ENCODE measurements at regions of chr22 and their contacts with region 1.

Region 1: DNA sequence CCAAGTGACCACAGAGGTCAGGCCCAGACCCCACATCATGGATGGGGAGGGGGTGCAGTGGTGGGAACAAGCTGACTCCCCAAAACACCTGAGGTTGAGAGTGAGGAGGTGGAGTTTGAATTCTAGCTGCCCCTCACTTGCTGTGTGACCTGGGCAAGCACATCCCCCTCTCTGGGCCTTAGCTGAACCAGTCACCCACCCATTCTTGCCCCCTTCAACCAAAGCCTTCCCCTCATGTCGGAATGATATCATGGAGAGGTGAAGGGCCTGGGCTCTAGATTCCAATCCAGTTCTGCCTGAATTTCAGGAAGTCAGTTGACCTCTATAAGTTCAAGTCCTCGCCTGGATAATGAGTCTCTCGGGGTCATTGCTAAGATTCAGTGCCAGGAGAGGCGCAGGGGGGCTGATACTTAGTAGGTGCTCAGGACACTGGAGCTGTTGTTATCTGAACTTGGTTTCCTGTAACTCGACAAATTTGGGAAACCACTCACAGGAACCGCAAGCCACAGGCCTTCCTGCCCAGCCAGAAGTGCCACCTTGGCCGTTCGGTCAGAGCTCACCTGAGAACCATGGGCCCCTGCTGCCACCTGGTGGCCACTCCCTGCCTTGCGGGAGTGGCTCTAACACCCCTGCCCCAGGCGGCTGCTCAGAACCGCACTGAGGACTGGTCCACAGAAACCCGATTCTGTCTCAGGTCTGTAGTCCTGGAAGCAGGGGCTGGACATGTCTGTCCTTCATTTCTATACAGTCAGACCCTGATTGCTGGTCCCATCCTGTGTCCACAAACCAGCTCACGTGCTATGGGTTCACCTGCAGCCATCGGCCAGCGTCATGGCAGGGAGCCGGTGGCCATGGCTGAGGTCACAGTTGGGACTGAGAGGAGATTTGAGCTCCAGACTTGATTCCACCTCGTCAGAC is 6.9 kb downstream of the CDC42EP1 start:
- DNase-seq: peak; percentile 91
- H3K4me3 ChIP-seq: no peak overlapping the region; a peak in 1 of 4 replicates
- H3K27ac ChIP-seq: no peak overlapping the region
- H3K4me1 ChIP-seq: peaks cover 0 to 24% of the 10 kb centered on the region in 2 experiments; a peak in 3 of 4 replicates
- H3K27me3 ChIP-seq: no peaks in the 10 kb centered on the region
- CTCF ChIP-seq: peak; percentile 87
- EP300 ChIP-seq: no peak
- RAD21 ChIP-seq: peak; percentile 95

Region 2: DNA sequence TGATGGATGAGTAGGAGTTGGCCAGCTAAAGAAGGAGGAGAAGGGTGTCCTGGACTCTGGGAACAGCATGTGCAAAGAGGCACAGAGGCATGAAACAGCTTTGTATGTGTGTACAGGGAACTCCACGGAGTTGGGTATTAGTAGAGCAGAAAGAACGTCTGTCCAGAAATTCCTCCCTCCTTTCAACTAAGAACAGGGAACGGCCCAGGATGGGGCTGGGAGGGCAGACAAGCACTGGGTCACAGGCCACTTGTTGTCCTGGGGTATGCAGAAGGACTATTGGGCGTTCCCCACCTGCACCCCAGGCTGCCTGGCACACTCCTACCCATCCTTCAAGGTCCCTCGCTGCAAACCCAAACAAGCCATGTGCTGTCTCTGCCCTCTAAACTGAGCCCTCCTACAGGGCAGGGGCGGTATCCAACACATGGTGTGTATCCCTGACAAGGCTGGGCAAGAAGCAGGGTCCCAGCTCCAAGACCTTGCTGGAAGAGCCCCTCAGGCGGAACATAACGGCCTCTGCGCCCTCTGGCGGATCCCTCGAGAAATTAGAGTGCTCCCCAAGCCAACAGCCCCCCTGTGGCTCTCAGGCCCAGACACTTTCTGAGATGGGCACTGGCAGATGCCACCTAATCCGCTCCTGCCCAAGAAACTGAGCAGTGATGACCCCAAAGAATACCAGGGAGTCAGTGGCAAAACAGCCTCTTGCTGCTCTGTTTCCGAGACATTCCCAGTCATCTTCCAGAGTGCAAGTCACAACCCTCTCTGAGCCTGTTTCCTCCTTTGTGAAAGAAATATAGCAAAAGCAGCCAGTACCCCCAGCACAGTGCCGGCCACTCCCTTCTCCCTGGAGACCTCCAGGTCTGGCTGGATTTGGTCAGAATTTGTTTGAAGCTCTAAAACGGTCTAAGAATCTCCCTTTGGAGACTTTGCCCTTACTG is 138.2 kb before region 1 on chr22:
- CTCF ChIA-PET with region 1: interaction called, 15 read pairs
- POLR2A ChIA-PET with region 1: no interaction called
- DNase-seq: peak; percentile 88
- H3K4me3 ChIP-seq: no peak overlapping the region; a peak in 1 of 4 replicates
- H3K27ac ChIP-seq: no peak overlapping the region
- H3K4me1 ChIP-seq: peaks cover 0 to 6% of the 10 kb centered on the region in 2 experiments; a peak in 1 of 4 replicates
- H3K27me3 ChIP-seq: no peaks in the 10 kb centered on the region; the same call in 1 of the 2 replicates
- CTCF ChIP-seq: peak; percentile 89
- EP300 ChIP-seq: no peak
- RAD21 ChIP-seq: peak; percentile 71

Region 3: GRCh38 chr22:37472418-37473006 is 94.7 kb before region 1 on chr22:
- CTCF ChIA-PET with region 1: interaction called, 46 read pairs
- POLR2A ChIA-PET with region 1: no interaction called
- DNase-seq: peak; percentile 75
- H3K4me3 ChIP-seq: no peak overlapping the region
- H3K27ac ChIP-seq: no peak overlapping the region
- H3K4me1 ChIP-seq: no peaks in the 10 kb centered on the region; a peak in 1 of 4 replicates
- H3K27me3 ChIP-seq: no peaks in the 10 kb centered on the region
- CTCF ChIP-seq: peak; percentile 63
- EP300 ChIP-seq: no peak
- RAD21 ChIP-seq: peak; percentile 53

Region 4: DNA sequence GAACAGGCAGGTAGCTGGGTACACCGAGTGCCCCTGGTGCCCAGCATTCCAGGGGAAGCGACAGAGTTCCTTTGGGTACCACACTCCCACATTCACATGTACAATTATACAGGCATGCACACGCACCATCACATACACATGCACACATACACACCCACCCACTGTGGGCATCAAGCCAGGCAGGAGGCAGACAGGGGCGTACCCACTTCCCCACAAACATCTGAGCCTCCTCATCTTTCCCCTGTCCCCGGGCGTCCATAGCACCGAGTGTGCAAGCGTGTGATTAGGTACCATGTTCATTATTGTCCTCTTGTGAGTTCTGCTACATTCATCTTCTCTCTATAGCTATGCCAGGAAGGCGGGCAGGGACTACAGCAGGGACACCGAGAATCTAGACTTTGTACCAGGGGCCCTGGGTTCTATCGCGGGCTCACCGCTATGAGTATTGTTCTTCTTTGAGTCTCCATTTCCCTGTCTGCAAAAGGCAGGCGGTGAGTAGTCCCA is 45.9 kb before region 1 on chr22:
- CTCF ChIA-PET with region 1: interaction called, 16 read pairs
- POLR2A ChIA-PET with region 1: interaction called, 3 read pairs
- DNase-seq: no peak
- H3K4me3 ChIP-seq: no peak overlapping the region
- H3K27ac ChIP-seq: no peak overlapping the region
- H3K4me1 ChIP-seq: peaks cover 12 to 14% of the 10 kb centered on the region in 2 experiments; a peak in 3 of 4 replicates
- H3K27me3 ChIP-seq: no peaks in the 10 kb centered on the region
- CTCF ChIP-seq: no peak
- EP300 ChIP-seq: no peak
- RAD21 ChIP-seq: no peak

Region 5: GRCh38 chr22:37581504-37581903 is 14.3 kb after region 1 on chr22:
- CTCF ChIA-PET with region 1: interaction called, 43 read pairs
- POLR2A ChIA-PET with region 1: no interaction called
- DNase-seq: no peak
- H3K4me3 ChIP-seq: no peak overlapping the region
- H3K27ac ChIP-seq: no peak overlapping the region
- H3K4me1 ChIP-seq: no peaks in the 10 kb centered on the region; a peak in 2 of 4 replicates
- H3K27me3 ChIP-seq: no peaks in the 10 kb centered on the region
- CTCF ChIP-seq: no peak
- EP300 ChIP-seq: no peak
- RAD21 ChIP-seq: no peak

Region 6: DNA sequence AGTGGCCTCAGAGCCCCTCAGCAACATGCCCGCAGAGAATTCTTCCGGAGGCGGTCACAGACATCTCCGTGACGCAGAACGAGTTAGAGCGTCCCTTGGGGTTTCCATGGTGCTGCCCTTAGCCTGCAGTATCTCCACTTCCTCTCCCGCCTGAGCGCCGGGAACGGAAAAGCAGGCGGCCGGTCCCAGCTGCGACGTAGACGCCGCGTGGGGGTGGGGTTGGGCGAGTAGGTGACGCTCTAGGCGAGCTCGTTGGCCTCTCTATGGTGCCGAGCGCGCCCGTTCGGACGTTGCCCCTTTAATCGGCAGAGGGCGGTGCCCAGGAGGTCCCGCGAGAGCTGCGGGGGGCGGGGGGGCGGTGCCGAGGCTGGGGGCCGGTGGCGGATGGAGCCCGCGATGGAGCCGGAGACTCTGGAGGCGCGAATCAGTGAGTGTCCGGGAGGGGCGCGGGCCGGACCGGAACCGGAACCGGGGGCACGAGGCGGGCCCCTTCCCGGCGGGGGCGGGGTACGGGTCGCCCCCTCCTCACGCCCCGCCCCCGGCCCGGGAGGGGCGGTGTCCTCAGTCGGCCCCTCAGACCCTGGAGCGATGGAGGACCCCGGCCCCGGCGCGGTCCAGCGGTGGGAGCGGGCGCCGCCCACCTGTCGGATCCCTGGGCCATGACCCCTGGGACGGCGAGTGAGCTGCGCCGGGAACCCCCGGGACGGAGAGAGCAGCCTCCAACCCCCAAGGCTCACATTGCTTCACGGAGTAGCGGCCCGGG is 41.5 kb after region 1 on chr22 and contains the start of gene GGA1:
- CTCF ChIA-PET with region 1: interaction called, 30 read pairs
- POLR2A ChIA-PET with region 1: no interaction called
- DNase-seq: peak; percentile 97
- H3K4me3 ChIP-seq: peak within 1 kb of the TSS; percentile 86 to 91
- H3K27ac ChIP-seq: peak within 1 kb of the TSS; percentile 92 to 98
- H3K4me1 ChIP-seq: peaks cover 7 to 26% of the 10 kb centered on the region in 2 experiments; a peak in 1 of 4 replicates
- H3K27me3 ChIP-seq: no peaks in the 10 kb centered on the region
- CTCF ChIP-seq: no peak
- EP300 ChIP-seq: no peak; a peak in 1 of 4 replicates
- RAD21 ChIP-seq: no peak
- polyA plus RNA-seq, gene GGA1: 81.1 and 99.4 TPM in 2 replicates

Region 7: GRCh38 chr22:37752466-37753087 is 185.4 kb after region 1 on chr22:
- CTCF ChIA-PET with region 1: no interaction called
- POLR2A ChIA-PET with region 1: no interaction called
- DNase-seq: peak; percentile 94
- H3K4me3 ChIP-seq: 0 out of 4 replicates have a peak overlapping the region, but pooled peaks of 1 of the 2 experiments have one; percentile 1
- H3K27ac ChIP-seq: peak overlapping the region; percentile 77 to 96
- H3K4me1 ChIP-seq: peaks cover 40 to 51% of the 10 kb centered on the region in 2 experiments
- H3K27me3 ChIP-seq: no peaks in the 10 kb centered on the region
- CTCF ChIP-seq: peak; percentile 25; the same call in 1 of the 2 replicates
- EP300 ChIP-seq: peak; percentile 78 to 88
- RAD21 ChIP-seq: peak; percentile 36

Region 8: DNA sequence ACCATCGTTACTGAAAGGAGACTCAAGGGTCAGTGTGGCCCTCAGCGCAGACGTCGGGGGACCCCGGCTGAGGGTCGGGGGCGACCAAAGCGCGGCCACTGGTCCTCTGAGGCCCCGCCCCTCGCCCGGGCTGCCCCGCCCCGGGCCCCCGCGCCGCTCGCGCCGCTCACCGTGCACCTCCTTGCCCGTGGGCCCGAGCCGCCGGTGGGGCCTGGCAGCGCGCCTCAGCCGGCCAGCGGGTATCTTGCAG is 276.5 kb after region 1 on chr22:
- CTCF ChIA-PET with region 1: no interaction called
- POLR2A ChIA-PET with region 1: no interaction called
- DNase-seq: peak; percentile 85
- H3K4me3 ChIP-seq: peak overlapping the region; percentile 63 to 88
- H3K27ac ChIP-seq: peak overlapping the region; percentile 79 to 88
- H3K4me1 ChIP-seq: peaks cover 9 to 10% of the 10 kb centered on the region in 2 experiments; a peak in 2 of 4 replicates
- H3K27me3 ChIP-seq: no peaks in the 10 kb centered on the region
- CTCF ChIP-seq: no peak
- EP300 ChIP-seq: no peak
- RAD21 ChIP-seq: no peak

Measured in SK-N-SH (cell line).